MCF 10A (cell line): ENCODE measurements at regions of chr18 and their contacts with region 1.

Region 1: GRCh38 chr18:9136315-9137155 is at the start of gene ANKRD12:
- DNase-seq: peak; percentile 95
- H3K4me3 Mint-ChIP-seq: peak within 1 kb of the TSS; percentile 90
- H3K27ac Mint-ChIP-seq: peak within 1 kb of the TSS; percentile 94
- H3K4me1 Mint-ChIP-seq: peaks cover 32% of the 10 kb centered on the region
- H3K27me3 Mint-ChIP-seq: no peaks in the 10 kb centered on the region
- CTCF ChIP-seq: no peak
- total RNA-seq, gene ANKRD12: 25.3 and 36.7 TPM in 2 replicates

Region 2: DNA sequence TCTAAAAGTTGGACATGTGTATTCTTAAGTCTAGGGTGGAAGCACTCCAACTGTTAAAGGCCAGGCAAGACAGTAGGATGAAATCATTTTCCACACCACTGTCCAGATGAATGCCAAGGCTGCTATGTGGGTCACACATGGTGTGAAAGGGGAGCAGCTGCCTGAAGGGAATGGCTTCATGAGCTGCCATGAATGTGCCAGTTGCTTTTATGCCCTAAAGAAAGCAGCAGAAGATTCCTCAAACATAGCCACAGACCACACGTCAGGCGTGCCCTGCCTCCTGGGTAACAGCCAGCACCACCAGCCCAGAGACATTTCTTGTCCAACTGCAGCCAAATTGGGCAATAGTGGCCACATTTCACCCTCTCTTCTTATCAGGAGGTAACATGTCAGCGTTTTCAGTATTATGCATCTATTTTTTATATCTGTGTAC is 301.0 kb before region 1 on chr18:
- CTCF ChIA-PET with region 1: no interaction called
- POLR2A ChIA-PET with region 1: no interaction called
- intact Hi-C with region 1: no loop called
- DNase-seq: peak; percentile 79
- H3K4me3 Mint-ChIP-seq: no peak overlapping the region
- H3K27ac Mint-ChIP-seq: no peak overlapping the region
- H3K4me1 Mint-ChIP-seq: peaks cover 11% of the 10 kb centered on the region
- H3K27me3 Mint-ChIP-seq: no peaks in the 10 kb centered on the region
- CTCF ChIP-seq: no peak

Region 3: DNA sequence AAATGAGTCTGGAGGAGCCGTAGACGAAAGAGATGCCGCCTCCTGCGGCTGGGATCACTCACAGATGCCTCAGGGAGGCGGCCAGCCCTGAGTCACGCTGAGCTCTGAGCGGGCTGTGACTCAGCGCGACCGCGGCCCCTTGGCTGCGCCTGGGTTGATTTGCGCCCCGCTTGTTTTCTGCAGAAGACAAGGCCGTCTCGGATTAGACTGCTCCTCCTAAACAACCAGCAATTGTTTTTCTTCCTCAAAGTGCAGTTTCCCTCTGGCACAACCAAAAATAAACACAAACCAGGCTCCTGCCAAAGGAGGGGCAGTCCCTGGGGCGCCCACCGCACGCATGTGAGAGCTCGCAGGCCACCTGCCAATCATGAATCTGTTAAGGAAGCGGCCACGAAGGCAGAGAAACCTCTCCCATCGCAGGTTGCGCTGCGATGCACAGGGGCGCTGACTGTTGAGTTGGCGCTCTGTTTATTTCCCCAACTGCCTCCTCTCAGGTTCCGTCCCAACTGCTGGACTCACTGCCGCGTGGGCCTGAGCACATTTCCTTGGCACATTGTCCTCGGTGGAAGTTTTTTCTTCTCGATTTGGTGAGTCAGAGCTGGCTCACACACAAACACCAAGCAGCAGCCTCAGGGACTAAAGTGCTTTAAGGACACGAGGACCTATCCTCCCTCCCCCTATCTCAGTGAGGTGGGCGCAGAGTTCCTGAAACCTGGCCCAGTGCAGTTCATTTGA is 119.2 kb before region 1 on chr18:
- CTCF ChIA-PET with region 1: no interaction called
- POLR2A ChIA-PET with region 1: interaction called, 10 read pairs
- intact Hi-C with region 1: no loop called
- DNase-seq: peak; percentile 94
- H3K4me3 Mint-ChIP-seq: peak overlapping the region; percentile 63
- H3K27ac Mint-ChIP-seq: peak overlapping the region; percentile 46
- H3K4me1 Mint-ChIP-seq: peaks cover 13% of the 10 kb centered on the region
- H3K27me3 Mint-ChIP-seq: no peaks in the 10 kb centered on the region
- CTCF ChIP-seq: no peak

Region 4: DNA sequence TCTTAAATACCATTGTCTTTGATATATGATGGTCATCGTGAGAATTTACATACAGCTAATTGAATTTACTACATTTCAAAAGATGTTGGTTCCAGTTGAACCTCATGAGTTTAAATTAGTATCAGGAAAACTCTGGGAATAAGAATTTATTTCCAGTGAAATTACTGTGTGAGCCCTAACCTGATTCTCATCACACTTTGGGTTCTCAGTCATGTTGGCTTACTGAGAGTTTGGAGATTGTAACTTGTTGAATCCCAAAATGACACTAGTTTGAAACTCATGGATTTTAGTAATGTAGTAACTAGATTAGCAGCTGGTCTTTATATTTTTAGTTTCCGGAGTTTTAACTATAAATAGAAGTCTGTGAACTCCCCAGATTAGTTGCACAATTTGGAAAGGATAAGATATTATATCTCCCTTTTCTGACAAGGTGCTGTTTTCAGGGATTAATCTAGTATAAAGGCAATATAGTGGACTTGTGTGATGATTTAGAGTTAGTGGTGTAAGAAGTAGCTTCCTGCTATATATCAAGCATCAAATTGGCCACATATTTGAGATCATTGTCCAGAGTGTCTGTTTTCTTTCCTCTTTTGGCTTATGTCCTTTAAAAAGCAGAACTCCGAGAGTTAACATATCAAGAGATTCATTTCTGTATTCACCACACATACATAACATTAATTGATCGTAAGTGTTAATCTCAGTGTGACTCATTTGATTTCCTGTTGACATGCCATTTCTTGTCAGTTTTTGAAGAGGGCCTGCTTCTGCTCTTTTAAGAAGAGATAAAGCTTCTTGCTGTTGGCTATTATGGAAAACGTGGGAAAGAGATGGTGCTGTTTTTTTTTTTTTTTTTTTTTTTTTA is 18.3 kb before region 1 on chr18:
- CTCF ChIA-PET with region 1: interaction called, 4 read pairs
- POLR2A ChIA-PET with region 1: interaction called, 586 read pairs
- intact Hi-C with region 1: no loop called
- DNase-seq: peak; percentile 44
- H3K4me3 Mint-ChIP-seq: peak overlapping the region; percentile 52
- H3K27ac Mint-ChIP-seq: peak overlapping the region; percentile 98
- H3K4me1 Mint-ChIP-seq: peaks cover 37% of the 10 kb centered on the region
- H3K27me3 Mint-ChIP-seq: no peaks in the 10 kb centered on the region
- CTCF ChIP-seq: no peak

Region 5: GRCh38 chr18:9296233-9297006 is 159.9 kb after region 1 on chr18:
- CTCF ChIA-PET with region 1: no interaction called
- POLR2A ChIA-PET with region 1: no interaction called
- intact Hi-C with region 1: no loop called
- DNase-seq: no peak
- H3K4me3 Mint-ChIP-seq: no peak overlapping the region
- H3K27ac Mint-ChIP-seq: no peak overlapping the region
- H3K4me1 Mint-ChIP-seq: no peaks in the 10 kb centered on the region
- H3K27me3 Mint-ChIP-seq: no peaks in the 10 kb centered on the region
- CTCF ChIP-seq: no peak